PC-3 (cell line): ENCODE measurements at regions of chr3 and their contacts with region 1.

Region 1: GRCh38 chr3:109643590-109643989 is 306.2 kb upstream of the DPPA4 start:
- DNase-seq: peak; percentile 90
- ATAC-seq: peak; percentile 87
- H3K4me3 ChIP-seq: no peak overlapping the region
- H3K27ac ChIP-seq: peak overlapping the region; percentile 90
- H3K4me1 ChIP-seq: peaks cover 54% of the 10 kb centered on the region
- H3K27me3 ChIP-seq: no peaks in the 10 kb centered on the region
- CTCF ChIP-seq: no peak

Region 2: GRCh38 chr3:109685084-109686079 is 41.8 kb after region 1 on chr3:
- CTCF ChIA-PET with region 1: no interaction called
- POLR2A ChIA-PET with region 1: no interaction called
- intact Hi-C with region 1: loop called (anchors 5 kb)
- DNase-seq: peak; percentile 99
- ATAC-seq: peak; percentile 97
- H3K4me3 ChIP-seq: no peak overlapping the region
- H3K27ac ChIP-seq: peak overlapping the region; percentile 63
- H3K4me1 ChIP-seq: peaks cover 18% of the 10 kb centered on the region
- H3K27me3 ChIP-seq: no peaks in the 10 kb centered on the region
- CTCF ChIP-seq: no peak

Region 3: DNA sequence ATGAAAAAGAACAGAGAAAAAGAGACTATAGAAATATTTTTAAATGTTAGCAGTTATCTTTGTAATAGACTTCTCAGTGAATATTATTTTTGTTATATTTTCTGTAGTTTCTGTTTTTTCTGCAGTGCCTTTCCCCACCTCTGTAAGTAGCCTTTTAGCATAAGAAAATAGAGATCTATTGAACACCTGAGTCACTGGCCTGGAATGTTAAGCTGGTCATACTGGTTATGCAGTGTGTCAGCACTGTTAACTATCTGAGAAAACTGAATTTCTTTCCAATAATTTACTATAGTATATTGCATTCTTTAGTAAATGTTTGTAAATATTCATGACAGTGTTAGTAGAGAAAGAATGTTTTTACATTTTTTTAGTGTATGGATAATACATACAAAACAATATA is 1507.8 kb after region 1 on chr3:
- CTCF ChIA-PET with region 1: no interaction called
- POLR2A ChIA-PET with region 1: interaction called, 10 read pairs
- intact Hi-C with region 1: no loop called
- DNase-seq: peak; percentile 94
- ATAC-seq: peak; percentile 100
- H3K4me3 ChIP-seq: 0 out of 2 replicates have a peak overlapping the region, but pooled peaks have one; percentile 21
- H3K27ac ChIP-seq: no peak overlapping the region
- H3K4me1 ChIP-seq: peaks cover 18% of the 10 kb centered on the region
- H3K27me3 ChIP-seq: no peaks in the 10 kb centered on the region
- CTCF ChIP-seq: no peak; the same call in 1 of the 2 replicates

Region 4: GRCh38 chr3:111616417-111617105 is 1973.0 kb after region 1 on chr3:
- CTCF ChIA-PET with region 1: no interaction called
- POLR2A ChIA-PET with region 1: interaction called, 20 read pairs
- intact Hi-C with region 1: no loop called
- DNase-seq: peak; percentile 62
- ATAC-seq: peak; percentile 12; the same call in 1 of the 2 replicates
- H3K4me3 ChIP-seq: no peak overlapping the region
- H3K27ac ChIP-seq: no peak overlapping the region
- H3K4me1 ChIP-seq: peaks cover 20% of the 10 kb centered on the region
- H3K27me3 ChIP-seq: no peaks in the 10 kb centered on the region
- CTCF ChIP-seq: peak; percentile 58